ENCODE measurements at regions of chr1 and their contacts with region 1.

Region 1: DNA sequence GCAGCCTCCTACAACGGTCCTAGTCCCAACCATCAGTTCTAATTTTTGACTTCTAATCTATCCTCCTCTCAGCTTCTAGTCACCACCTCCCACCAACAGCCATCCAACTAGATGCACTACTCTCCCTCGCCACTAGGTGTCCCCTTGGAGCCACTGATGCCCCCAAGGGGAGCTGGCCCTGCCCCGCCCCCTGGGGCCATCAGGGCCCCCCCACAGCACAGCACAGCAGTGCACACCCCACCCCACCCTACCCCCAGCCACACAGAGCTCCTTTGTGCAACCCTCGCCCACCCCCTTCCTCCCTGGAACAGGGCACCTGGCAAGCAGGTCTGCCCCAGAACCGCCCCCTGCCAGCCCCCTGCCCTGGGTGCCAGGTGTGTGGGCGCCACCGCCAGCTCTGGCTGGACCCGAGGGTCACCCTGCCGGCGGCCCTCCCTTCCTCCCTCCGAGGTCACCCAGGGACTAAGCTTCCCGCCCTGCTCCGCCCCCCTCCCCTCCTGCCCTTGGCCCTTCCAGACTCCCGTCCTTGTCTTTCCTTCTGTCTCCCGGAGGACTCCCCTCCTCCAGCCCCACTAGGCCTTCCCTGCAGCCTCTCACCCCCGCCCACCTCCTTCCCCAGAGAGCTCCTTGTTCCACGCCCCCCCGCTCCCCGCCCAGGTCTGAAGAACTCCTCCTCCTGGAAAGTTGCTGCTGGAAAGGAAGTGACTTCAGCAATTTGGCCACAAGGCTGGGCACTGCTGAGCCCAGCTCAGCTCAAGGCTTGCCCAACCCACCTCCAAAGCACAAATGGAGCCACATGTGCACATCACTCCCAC is 47.0 kb downstream of the AHDC1 start:
- DNase-seq: peak; percentile 88
- ATAC-seq: peak; percentile 93
- H3K4me3 Mint-ChIP-seq: no peak overlapping the region
- H3K27ac Mint-ChIP-seq: peak overlapping the region; percentile 72
- H3K4me1 Mint-ChIP-seq: peaks cover 21% of the 10 kb centered on the region
- H3K27me3 Mint-ChIP-seq: no peaks in the 10 kb centered on the region
- CTCF ChIP-seq: peak; percentile 99

Region 2: GRCh38 chr1:27402349-27402754 is 154.6 kb before region 1 on chr1:
- CTCF ChIA-PET with region 1: interaction called, 10 read pairs
- POLR2A ChIA-PET with region 1: interaction called, 3 read pairs
- intact Hi-C with region 1: no loop called
- DNase-seq: no peak
- ATAC-seq: no peak
- H3K4me3 Mint-ChIP-seq: no peak overlapping the region
- H3K27ac Mint-ChIP-seq: peak overlapping the region; percentile 83
- H3K4me1 Mint-ChIP-seq: peaks cover 24% of the 10 kb centered on the region
- H3K27me3 Mint-ChIP-seq: no peaks in the 10 kb centered on the region
- CTCF ChIP-seq: no peak

Region 3: DNA sequence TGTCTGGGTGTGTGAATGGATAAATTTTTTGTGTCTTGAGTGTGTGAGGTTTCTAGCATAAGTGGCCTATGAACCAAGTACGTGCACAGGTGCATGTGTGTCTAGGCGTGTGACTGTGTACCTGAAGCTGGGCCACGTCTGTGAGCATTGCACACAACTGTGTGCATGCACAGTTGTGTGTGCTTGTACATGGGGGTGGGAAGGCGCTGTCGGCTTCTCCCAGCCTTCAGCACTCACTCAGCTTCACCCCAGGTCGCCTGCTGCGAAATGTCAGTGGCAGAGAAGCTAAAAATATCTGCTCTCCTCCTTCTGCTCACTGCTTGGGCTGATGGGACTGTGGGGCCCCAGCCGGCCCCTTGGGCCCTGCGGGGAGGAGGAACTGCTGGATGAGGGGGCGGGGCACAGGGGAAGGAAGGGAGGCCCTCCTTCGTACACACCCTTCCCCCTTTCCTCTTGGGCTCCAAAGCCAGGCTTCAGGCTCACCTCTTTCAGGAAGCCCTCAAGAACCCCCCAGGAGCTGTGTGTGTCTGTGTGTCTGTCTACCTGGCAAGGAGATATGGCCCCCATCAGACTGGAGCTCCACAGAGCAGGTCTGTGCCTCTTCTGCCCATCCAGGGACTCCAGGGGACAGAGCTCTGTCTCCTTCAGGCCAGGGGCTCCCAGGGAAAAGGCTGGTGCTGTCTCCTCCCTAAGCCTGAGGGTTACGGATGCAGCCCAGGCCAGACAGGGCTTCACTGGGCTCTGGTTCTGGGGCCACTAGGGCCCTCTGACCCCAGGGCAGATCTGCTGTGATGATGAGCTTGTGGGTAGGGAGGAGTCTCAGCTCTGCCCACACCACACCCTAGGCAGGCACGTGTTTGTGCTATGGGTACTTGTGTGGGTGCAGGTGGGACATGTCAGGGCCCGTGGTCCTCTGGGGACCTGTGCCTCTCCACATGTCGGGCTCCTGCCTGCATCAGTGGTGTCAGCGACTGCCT is 31.4 kb before region 1 on chr1:
- CTCF ChIA-PET with region 1: interaction called, 14 read pairs
- POLR2A ChIA-PET with region 1: interaction called, 4 read pairs
- intact Hi-C with region 1: no loop called
- DNase-seq: peak; percentile 86
- ATAC-seq: peak; percentile 57
- H3K4me3 Mint-ChIP-seq: peak overlapping the region; percentile 97
- H3K27ac Mint-ChIP-seq: peak overlapping the region; percentile 96
- H3K4me1 Mint-ChIP-seq: peaks cover 51% of the 10 kb centered on the region
- H3K27me3 Mint-ChIP-seq: no peaks in the 10 kb centered on the region
- CTCF ChIP-seq: no peak

Region 4: DNA sequence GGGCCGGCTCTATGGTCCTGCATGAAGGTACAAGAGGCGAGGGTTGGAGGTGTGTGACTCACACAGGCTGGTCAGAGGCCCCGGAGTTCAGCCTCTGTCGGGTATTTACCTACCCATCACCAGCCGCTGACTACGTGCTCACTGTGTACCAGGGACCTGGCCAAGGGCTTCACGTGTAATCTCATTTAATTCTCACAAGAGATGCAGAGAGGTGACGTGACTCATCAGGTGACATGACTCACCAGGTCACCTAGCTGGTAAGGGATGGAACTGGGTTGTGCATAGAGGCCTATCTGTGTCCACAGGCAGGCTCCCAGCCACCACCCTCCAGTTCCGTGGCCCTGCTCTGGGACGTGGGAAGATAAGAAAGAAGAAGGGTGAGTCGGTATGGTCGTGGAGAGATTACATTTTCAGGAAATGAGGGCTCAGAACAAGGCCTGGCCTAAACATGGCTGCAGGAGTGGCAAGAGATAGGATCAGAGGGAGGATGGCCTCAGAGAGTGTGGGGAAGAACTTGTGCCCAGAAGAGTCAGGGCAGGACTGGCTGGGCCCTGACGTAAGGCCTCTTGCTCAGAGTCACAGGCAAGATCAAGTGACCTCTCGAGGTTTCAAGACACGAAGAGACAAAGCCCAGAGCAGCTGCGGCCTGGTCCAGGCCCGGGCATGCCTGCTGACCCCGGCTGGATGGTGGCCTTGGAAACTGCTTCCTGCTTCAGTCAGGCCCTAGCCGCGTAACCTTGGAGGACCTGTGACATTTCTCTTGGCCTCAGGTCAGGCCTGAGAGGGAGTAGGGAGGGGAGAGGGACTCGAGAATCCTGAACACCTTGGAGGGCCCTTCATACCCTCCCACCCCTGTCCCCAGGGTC is 14.3 kb before region 1 on chr1:
- CTCF ChIA-PET with region 1: interaction called, 33 read pairs
- POLR2A ChIA-PET with region 1: no interaction called
- intact Hi-C with region 1: no loop called
- DNase-seq: peak; percentile 74
- ATAC-seq: peak; percentile 91
- H3K4me3 Mint-ChIP-seq: no peak overlapping the region
- H3K27ac Mint-ChIP-seq: peak overlapping the region; percentile 43
- H3K4me1 Mint-ChIP-seq: peaks cover 11% of the 10 kb centered on the region
- H3K27me3 Mint-ChIP-seq: no peaks in the 10 kb centered on the region
- CTCF ChIP-seq: no peak

Region 5: DNA sequence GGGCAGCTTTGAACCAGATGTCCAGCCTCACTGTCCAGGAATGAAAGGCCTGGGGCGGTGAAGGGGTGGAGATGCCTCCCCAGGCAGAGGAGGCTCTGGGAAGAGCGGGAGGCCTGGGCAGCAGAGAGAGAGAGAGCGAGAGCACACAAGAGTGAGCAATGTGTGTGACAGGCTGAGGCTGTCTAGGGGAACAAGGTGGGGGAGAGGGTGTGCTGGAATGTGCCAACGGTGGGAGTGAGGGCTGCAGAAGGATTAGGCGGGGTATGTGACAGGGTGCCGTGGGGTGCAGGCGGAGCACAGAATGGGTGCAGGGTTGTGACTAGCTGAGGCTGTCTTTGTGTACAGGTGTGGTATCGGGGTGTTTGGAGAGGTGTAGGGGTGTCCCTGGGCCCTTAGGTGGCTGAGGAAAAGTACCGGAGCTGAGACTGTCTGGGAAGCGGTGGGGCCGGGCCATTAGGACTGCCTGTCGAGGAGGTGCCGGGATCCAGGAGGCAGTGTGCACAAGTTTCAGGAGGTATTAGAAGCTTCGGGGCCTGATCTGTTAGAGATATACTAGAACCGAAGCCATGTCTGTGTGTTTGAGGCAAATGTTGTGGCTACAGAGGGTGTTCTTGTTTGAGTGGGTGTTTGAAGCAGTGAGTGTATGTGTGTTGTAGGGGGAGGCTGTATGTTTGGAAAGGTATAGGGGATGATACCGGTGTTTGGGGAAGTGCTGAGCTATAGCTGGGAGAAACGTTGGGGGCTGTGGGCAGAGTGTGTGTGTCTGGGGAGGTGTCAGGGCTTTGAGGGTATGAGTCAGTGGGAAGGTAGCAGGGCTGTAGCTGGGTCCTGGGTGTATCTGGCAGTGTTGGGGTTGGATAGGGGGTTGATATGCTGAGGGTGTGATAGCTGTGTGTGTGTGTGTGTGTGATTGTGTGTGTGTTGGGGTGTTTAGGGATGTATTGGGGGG is 37.8 kb after region 1 on chr1:
- CTCF ChIA-PET with region 1: interaction called, 56 read pairs
- POLR2A ChIA-PET with region 1: no interaction called
- intact Hi-C with region 1: no loop called
- DNase-seq: peak; percentile 46
- ATAC-seq: peak; percentile 72
- H3K4me3 Mint-ChIP-seq: no peak overlapping the region
- H3K27ac Mint-ChIP-seq: no peak overlapping the region
- H3K4me1 Mint-ChIP-seq: peaks cover 14% of the 10 kb centered on the region
- H3K27me3 Mint-ChIP-seq: no peaks in the 10 kb centered on the region
- CTCF ChIP-seq: no peak

Region 6: GRCh38 chr1:27671964-27672749 is 115.2 kb after region 1 on chr1 and contains the start of gene IFI6:
- CTCF ChIA-PET with region 1: interaction called, 17 read pairs
- POLR2A ChIA-PET with region 1: no interaction called
- intact Hi-C with region 1: no loop called
- DNase-seq: peak; percentile 88
- ATAC-seq: peak; percentile 91
- H3K4me3 Mint-ChIP-seq: peak within 1 kb of the TSS; percentile 80
- H3K27ac Mint-ChIP-seq: peak within 1 kb of the TSS; percentile 90
- H3K4me1 Mint-ChIP-seq: peaks cover 34% of the 10 kb centered on the region
- H3K27me3 Mint-ChIP-seq: no peaks in the 10 kb centered on the region
- CTCF ChIP-seq: peak; percentile 35
- total RNA-seq, gene IFI6: 31.6 to 32.1 TPM